Activated T-helper 2 cell treated with anti-CD3 and anti-CD28 coated beads, Interferon-gamma antibody, Interleukin-2, Interleukin-4, amounts not matched to agents 10 μg/mL and 5 μg/mL and 100 μg/mL, durations not matched to agents 14 hours and 24 hours and 36 hours (primary cell): ENCODE measurements at regions of chr9 and their contacts with region 1.

Region 1: GRCh38 chr9:123975871-123976270 is 35.7 kb upstream of the LHX2 start:
- DNase-seq: no peak
- H3K4me3 Mint-ChIP-seq: no peak overlapping the region
- H3K27ac Mint-ChIP-seq: no peak overlapping the region
- H3K4me1 Mint-ChIP-seq: no peaks in the 10 kb centered on the region
- H3K27me3 Mint-ChIP-seq: peaks cover 8% of the 10 kb centered on the region

Region 2: GRCh38 chr9:123988311-123989049 is 12.6 kb after region 1 on chr9:
- intact Hi-C with region 1: loop called (anchors 2 kb)
- DNase-seq: no peak
- H3K4me3 Mint-ChIP-seq: no peak overlapping the region
- H3K27ac Mint-ChIP-seq: no peak overlapping the region
- H3K4me1 Mint-ChIP-seq: no peaks in the 10 kb centered on the region
- H3K27me3 Mint-ChIP-seq: peaks cover 21% of the 10 kb centered on the region

Region 3: DNA sequence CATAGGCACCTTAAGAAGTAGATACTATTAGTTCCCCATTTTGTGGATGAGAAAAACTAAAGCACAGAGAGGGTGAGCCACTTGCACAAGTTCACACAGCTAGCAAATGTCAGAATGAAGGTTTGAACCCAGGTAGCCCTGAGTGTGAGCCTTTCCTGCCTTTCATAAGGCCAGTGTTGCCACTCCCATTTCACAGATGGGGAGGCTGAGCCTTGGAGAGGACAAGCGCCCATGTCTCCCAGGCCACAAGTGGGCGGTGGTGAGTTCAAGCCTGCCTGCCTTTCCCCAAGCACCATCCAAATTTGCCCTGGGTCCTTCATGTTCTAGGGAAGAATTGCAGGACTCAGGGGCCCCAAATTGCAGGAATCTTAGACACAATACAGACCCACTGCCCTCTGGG is 86.3 kb after region 1 on chr9:
- intact Hi-C with region 1: no loop called
- DNase-seq: no peak
- H3K4me3 Mint-ChIP-seq: no peak overlapping the region
- H3K27ac Mint-ChIP-seq: no peak overlapping the region
- H3K4me1 Mint-ChIP-seq: no peaks in the 10 kb centered on the region
- H3K27me3 Mint-ChIP-seq: peaks cover 18% of the 10 kb centered on the region